Activated naive CD4-positive, alpha-beta T cell treated with anti-CD3 and anti-CD28 coated beads for 36 hours (primary cell): ENCODE measurements at regions of chr11 and their contacts with region 1.

Region 1: GRCh38 chr11:1694064-1694845 is 2.7 kb upstream of the KRTAP5-6 start:
- DNase-seq: peak; percentile 81
- H3K4me3 Mint-ChIP-seq: no peak overlapping the region
- H3K27ac Mint-ChIP-seq: no peak overlapping the region
- H3K4me1 Mint-ChIP-seq: peaks cover 3% of the 10 kb centered on the region
- H3K27me3 Mint-ChIP-seq: peaks cover 9% of the 10 kb centered on the region

Region 2: DNA sequence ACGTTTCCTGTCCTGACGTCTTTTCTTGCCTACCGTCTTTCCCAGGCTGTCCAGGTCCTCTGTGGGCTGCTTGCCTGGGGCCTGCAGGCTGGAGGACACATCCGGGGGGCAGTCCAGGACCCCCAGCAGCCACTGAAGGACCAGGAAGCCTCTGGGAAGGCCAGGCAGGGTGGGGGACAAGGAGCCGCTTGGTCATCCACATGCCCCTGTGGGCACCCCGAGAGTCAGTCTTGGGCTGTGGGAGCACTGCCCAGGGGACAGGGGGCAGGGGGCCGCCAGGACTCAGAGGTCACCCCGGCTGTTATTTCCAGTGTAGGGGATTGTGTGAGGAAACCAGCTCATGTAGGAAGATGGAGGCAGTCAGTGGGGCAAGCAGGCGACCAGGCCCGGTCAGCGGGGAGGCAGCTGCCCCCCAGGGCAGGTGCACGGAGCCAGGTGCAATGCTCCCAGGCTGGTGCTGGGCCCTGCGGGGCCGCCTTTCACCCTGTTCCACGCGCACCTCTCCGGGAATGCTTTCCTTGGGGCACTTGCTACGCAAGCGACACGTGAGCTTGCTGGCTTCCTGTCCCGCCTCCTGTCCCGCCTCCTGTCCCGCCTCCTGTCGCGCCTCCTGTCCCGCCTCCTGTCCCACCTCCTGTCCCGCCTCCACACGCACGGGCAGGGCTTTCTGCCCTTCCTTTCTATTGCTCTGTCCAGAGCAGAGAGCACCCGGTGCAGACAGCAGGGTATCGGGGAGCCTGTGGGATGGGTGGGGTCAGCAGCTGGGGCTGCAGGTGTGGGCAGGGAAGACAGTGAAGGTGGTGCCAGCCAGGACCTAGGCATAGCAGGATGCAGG is 431.9 kb before region 1 on chr11:
- CTCF ChIA-PET with region 1: no interaction called
- intact Hi-C with region 1: no loop called
- DNase-seq: peak; percentile 94
- H3K4me3 Mint-ChIP-seq: peak overlapping the region; percentile 85
- H3K27ac Mint-ChIP-seq: peak overlapping the region; percentile 87
- H3K4me1 Mint-ChIP-seq: peaks cover 16% of the 10 kb centered on the region
- H3K27me3 Mint-ChIP-seq: no peaks in the 10 kb centered on the region

Region 3: DNA sequence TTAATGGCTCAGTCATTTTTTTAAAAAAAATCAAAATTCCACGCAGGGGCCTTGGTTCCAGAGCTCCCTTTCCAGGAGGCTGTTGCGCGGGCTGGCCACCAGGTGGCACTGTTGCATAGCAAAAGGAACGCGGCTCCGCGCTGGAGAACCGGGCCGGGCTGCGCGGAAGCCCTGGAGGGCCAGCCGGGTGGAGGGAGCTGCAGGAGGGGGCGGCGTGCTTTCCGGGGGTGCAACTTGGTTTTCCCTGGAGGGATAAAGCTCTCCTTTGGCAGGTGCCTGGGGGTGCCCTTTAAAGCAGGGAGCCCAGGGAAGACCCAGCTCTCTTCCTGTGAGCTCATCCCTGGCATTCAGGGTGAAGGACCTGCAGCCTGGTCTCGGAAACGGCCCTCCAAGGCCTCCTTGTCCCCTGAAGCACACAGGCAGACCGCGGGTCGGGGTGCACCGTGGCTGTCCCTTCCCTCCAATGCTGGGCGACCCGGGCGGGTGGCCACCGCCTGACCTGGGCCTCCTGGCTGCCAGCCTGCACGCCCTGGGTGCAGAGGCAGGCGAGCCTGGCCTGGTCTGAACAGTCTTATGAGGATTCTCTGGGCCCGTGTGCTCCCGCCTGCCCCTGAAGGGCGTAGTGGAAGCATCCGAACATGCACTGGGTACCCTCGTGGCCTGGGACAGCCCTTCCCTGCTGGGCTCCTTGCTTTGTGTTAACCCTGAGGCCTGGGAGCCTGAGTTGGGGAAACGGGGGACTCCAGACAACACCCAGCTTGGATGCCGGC is 41.3 kb before region 1 on chr11:
- CTCF ChIA-PET with region 1: interaction called, 42 read pairs
- intact Hi-C with region 1: loop called (anchors 1 kb)
- DNase-seq: peak; percentile 74
- H3K4me3 Mint-ChIP-seq: no peak overlapping the region
- H3K27ac Mint-ChIP-seq: no peak overlapping the region
- H3K4me1 Mint-ChIP-seq: no peaks in the 10 kb centered on the region
- H3K27me3 Mint-ChIP-seq: peaks cover 9% of the 10 kb centered on the region

Region 4: GRCh38 chr11:1706634-1707400 is 12.6 kb after region 1 on chr11:
- CTCF ChIA-PET with region 1: interaction called, 15 read pairs
- intact Hi-C with region 1: no loop called
- DNase-seq: peak; percentile 35
- H3K4me3 Mint-ChIP-seq: no peak overlapping the region
- H3K27ac Mint-ChIP-seq: no peak overlapping the region
- H3K4me1 Mint-ChIP-seq: no peaks in the 10 kb centered on the region
- H3K27me3 Mint-ChIP-seq: no peaks in the 10 kb centered on the region

Region 5: DNA sequence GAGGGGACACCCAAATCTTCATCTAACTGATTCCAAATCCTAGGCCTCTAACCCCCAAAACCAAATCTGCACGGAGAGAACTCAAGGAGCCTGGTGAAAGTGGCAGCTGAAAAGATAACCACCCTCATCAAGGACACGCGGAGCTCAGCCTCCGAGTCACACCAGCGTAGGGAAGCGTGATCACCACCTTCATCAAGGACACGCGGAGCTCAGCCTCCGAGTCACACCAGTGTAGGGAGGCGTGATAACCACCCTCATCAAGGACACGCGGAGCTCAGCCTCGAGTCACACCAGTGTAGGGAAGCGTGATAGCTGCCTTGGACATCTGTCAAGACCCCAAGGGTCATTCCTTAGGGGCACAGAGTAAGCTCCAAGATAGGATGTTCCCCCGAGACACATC is 111.3 kb after region 1 on chr11:
- CTCF ChIA-PET with region 1: interaction called, 12 read pairs
- intact Hi-C with region 1: no loop called
- DNase-seq: no peak
- H3K4me3 Mint-ChIP-seq: no peak overlapping the region
- H3K27ac Mint-ChIP-seq: no peak overlapping the region
- H3K4me1 Mint-ChIP-seq: no peaks in the 10 kb centered on the region
- H3K27me3 Mint-ChIP-seq: peaks cover 2% of the 10 kb centered on the region

Region 6: DNA sequence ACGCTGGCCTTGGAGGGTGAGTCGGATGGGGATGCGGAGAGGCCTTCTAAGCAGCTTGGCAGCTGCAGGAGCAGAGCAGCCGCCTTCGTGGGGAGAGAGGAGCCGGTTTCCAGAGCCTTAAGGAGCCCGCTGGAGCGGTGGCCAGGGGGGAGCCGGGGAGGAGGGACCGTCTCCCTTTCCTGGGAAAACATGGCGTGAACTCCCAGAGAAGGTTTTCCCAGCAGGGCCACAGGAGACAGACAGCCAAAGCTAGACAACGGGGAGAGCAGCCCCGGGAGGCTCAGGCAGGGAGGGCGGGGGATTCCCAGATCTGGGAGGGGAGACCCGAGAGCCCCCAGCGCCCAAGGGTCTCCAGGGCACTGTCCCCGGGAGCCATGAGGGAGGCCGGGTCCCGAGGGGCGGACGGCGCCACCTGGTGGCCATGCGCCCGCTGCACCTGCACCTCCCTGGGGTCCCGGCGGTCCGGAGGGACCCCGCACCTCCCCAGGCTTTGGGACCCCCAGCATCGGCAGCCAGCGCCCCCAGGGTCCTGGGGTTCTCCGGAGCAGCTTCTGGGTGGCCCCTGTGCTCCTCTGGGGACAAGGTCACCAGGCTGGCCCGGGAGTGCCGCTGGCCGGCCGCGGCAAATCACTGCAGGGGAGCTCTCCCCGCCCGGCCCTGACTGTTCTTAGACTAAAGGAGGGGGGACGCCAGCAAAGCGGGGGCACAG is 138.1 kb after region 1 on chr11:
- CTCF ChIA-PET with region 1: interaction called, 232 read pairs
- intact Hi-C with region 1: loop called (anchors 1 kb)
- DNase-seq: peak; percentile 64
- H3K4me3 Mint-ChIP-seq: no peak overlapping the region
- H3K27ac Mint-ChIP-seq: no peak overlapping the region
- H3K4me1 Mint-ChIP-seq: no peaks in the 10 kb centered on the region
- H3K27me3 Mint-ChIP-seq: peaks cover 2% of the 10 kb centered on the region

Region 7: DNA sequence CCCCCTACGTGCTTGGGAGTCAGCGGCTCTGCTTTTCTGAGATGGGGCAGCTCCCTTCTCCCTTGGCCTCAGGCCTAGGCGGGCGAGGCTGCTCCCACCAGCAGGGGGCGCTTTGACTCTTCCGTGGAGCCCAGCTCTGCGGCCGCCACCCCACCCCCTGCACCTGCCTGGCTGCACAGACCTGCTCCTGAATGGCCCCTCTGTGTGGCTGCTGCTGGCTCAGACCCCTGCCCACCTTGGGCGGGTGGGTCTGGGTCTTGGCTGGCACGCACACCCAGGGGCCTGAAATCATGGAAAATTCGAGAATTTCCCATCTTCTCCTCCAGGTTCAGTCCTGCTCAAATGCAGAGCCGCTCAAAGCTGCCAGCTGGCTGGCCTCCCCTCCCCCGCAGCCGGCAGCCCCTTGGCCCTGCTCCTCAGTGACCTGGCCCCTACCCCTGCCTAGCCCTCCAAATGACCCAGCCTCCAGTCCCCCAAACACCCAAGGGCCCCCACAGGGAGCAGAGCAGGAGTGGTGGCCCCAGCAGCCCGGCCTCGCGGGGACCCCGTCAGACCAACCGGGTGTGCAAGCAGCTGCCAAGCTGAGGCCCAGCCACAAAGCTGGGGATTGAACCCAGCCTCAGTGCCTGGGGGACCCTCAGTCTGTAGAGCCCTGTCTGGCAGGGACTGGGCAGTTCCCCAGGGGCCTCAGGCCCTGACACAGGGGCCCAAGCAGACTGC is 188.4 kb after region 1 on chr11:
- CTCF ChIA-PET with region 1: interaction called, 12 read pairs
- intact Hi-C with region 1: no loop called
- DNase-seq: peak; percentile 85
- H3K4me3 Mint-ChIP-seq: no peak overlapping the region
- H3K27ac Mint-ChIP-seq: no peak overlapping the region
- H3K4me1 Mint-ChIP-seq: peaks cover 3% of the 10 kb centered on the region
- H3K27me3 Mint-ChIP-seq: no peaks in the 10 kb centered on the region

Region 8: DNA sequence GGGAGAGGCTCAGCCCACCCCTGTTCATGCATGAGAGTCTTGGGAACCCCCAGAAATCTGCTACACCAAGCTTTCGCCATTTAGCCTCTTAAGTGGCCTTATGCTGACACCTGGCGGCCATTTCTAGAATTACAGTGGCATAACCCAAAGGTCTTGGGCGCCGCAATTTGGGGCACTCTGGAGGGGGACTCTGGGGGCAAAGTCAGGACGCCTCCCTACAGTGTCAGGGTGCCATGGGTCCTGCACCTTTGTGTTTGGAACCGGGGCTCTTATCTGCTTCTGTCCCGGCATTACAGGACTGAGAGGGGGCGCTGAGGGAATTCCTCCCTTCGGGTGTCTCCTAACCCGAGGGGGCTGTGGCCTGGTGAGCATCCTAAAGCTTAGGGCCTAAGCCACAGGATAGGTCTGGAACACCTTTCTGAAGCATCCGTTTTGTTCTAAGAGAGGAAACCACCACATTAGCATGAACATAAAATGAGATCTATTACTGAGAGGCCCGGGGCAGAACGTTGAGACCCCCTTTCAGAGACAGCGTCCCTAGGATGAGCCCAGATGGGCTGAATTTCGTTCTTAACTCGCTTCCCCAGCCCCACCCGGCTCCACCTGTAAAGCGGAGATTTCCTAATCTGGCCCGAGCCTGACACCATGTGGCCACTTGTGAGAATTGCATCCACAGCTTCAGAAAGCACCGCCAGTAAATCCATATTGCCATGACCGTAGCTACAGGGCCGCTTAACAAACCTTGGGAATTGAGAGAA is 457.4 kb after region 1 on chr11:
- CTCF ChIA-PET with region 1: interaction called, 22 read pairs
- intact Hi-C with region 1: loop called (anchors 5 kb)
- DNase-seq: peak; percentile 88
- H3K4me3 Mint-ChIP-seq: no peak overlapping the region
- H3K27ac Mint-ChIP-seq: no peak overlapping the region
- H3K4me1 Mint-ChIP-seq: peaks cover 5% of the 10 kb centered on the region
- H3K27me3 Mint-ChIP-seq: peaks cover 33% of the 10 kb centered on the region